ENCODE measurements at regions of chr2 and their contacts with region 1.

Region 1: GRCh38 chr2:200888704-200889625 is at the starts of genes NIF3L1 and PPIL3:
- H3K4me3 Mint-ChIP-seq: peak within 1 kb of the TSS; percentile 94
- H3K27ac Mint-ChIP-seq: peak within 1 kb of the TSS; percentile 98
- H3K4me1 Mint-ChIP-seq: peaks cover 45% of the 10 kb centered on the region
- H3K27me3 Mint-ChIP-seq: no peaks in the 10 kb centered on the region

Region 2: DNA sequence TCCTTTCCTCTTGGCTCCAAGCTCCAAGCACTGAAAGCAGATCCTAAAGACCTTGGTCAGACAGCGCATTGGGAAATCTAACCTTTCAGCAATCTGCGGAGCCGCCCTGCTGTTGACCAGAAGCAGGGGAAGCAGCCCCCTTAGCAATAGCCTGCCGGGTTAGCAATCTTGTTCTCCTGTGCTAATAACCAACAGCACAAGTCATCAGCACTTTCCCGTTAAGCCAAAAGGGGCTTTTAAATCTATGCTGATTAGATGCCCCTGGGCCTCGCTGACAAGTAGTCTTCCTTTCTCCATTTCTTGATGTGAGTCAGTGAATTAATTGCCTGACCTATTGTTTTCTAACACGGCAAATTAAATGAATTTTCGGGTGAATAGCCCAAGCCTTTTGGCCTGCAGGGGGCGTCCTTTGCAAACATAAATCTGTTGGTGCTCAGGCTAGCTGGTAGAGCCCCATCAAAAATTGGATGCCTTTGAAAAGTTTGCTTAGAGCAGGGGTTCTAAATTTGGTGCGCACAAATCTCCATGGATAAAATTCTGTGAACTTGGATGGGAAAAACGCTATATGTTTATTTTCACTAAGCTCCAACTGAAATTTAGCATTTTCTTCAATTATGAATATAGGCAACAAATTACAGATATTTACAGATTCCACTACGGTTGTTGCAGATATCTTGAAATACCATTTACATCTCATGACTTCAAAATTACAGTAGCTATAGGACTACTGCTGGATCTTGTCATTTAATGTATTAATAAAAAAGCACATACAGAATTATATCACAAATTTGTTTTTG is 908.9 kb before region 1 on chr2:
- intact Hi-C with region 1: no loop called
- H3K4me3 Mint-ChIP-seq: no peak overlapping the region
- H3K27ac Mint-ChIP-seq: no peak overlapping the region
- H3K4me1 Mint-ChIP-seq: peaks cover 12% of the 10 kb centered on the region
- H3K27me3 Mint-ChIP-seq: peaks cover 4% of the 10 kb centered on the region

Region 3: DNA sequence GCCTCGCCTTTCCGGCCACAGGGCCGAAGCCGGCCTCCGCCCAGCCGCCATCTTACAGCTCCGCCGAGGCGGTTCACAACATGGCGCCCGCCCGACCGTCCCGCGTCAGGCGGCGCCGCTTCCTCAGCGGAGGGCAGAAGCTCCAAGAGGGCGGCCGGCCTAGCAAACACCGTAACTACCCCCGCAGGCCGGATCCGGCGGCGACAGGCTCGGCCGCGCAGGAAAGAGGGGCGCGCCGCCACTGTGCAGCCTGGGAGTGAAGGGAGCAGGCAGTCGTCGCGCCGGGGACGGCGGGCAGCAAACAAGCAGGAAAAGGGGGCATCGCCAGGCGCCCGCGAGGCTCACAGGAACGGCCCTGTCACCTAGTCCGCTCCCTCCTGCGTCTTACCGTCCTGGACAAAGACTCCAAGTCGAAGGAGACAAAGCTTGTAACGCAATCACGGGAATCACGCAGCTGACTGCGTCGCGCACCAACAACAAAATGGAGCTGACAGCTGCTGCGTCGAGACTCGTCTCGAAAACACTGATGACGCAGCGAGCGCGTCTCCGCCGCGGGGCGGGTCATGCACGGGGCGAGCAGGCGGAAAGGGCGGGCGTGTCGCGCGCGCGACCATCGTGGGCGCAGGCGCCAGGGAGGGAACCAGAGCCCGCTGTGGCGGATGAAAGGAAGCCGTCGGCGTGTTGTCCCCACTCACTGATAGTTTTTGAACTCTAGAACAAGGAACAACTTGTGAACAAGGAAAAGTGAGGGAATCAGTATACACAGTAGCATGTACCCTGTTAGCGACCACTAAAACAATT is 24.6 kb before region 1 on chr2 and contains the start of gene CLK1:
- intact Hi-C with region 1: loop called (anchors 1 kb)
- H3K4me3 Mint-ChIP-seq: peak within 1 kb of the TSS; percentile 100
- H3K27ac Mint-ChIP-seq: peak within 1 kb of the TSS; percentile 99
- H3K4me1 Mint-ChIP-seq: peaks cover 51% of the 10 kb centered on the region
- H3K27me3 Mint-ChIP-seq: no peaks in the 10 kb centered on the region

Region 4: DNA sequence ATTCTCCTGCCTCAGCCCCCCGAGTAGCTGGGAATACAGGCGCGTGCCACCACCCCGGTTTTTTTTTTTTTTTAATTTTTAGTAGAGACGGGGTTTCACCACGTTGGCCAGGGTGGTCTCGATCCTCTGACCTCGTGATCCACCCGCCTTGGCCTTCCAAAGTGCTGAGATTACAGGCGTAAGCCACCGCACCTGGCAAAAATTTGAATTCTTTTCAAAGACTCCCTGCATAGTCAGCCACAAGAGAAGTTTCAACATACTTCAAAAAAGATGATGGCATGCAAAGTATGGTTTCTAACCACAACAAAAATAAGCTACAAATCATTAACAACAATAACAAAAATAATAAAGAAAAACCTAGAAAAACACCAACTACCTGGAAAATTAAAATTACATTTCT is 160.5 kb after region 1 on chr2:
- intact Hi-C with region 1: no loop called
- H3K4me3 Mint-ChIP-seq: no peak overlapping the region
- H3K27ac Mint-ChIP-seq: no peak overlapping the region
- H3K4me1 Mint-ChIP-seq: peaks cover 22% of the 10 kb centered on the region
- H3K27me3 Mint-ChIP-seq: no peaks in the 10 kb centered on the region